Spleen (tissue), 13 donors: ENCODE measurements at regions of chr18 and their contacts with region 1.

Region 1: GRCh38 chr18:13629841-13630715 is 96.3 kb downstream of the FAM210A start:
- DNase-seq: no peak
- H3K4me3 ChIP-seq: no peak overlapping the region
- H3K27ac ChIP-seq: no peak overlapping the region
- H3K4me1 ChIP-seq: peaks cover 0 to 24% (median 9%) of the 10 kb centered on the region in 6 donors
- H3K27me3 ChIP-seq: no peaks in the 10 kb centered on the region
- CTCF ChIP-seq: peak; percentile 52 to 93 (median 72)
- POLR2A ChIP-seq: no peak

Region 2: GRCh38 chr18:13558124-13558523 is 72.0 kb before region 1 on chr18:
- intact Hi-C with region 1: loop called (anchors 5 kb)
- DNase-seq: no peak
- H3K4me3 ChIP-seq: no peak overlapping the region
- H3K27ac ChIP-seq: no peak overlapping the region
- H3K4me1 ChIP-seq: peaks cover 6 to 28% (median 21%) of the 10 kb centered on the region in 6 donors
- H3K27me3 ChIP-seq: no peaks in the 10 kb centered on the region
- CTCF ChIP-seq: peak; percentile 42 to 80 (median 69)
- POLR2A ChIP-seq: no peak

Region 3: DNA sequence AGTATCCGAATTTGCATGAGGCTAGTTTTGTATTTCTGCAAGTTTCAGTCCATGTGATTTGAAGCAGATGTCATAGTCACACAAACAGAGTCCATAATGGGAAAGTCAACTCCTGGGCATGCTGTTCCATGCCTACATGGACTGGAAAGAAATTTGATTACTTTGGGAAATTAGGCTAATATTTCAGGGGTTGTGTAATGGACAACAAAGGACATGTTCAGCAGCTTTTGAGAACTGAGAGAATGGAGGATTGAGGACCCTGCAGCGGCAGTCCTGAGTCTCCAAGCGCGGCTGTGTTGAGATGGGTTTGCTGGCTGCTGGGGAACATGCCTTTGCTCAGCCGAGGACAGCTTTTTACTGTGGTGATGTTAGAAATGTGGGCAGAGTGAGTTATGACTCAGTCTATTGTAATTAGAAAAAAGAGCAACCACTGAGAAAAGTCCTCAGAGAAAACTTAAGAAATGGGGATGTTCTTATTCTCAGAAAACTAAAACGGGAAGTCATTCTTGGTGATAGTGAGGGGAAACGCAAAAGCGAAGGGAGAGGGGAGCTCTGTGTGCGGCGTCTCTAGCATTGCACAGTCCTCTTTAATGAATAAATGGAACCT is 52.9 kb before region 1 on chr18:
- intact Hi-C with region 1: no loop called
- DNase-seq: no peak
- H3K4me3 ChIP-seq: peak overlapping the region in 1 of 8 donors; percentile 37
- H3K27ac ChIP-seq: peak overlapping the region; percentile 19 to 81 (median 46)
- H3K4me1 ChIP-seq: peaks cover 14 to 46% (median 38%) of the 10 kb centered on the region in 6 donors
- H3K27me3 ChIP-seq: no peaks in the 10 kb centered on the region
- CTCF ChIP-seq: no peak
- POLR2A ChIP-seq: no peak